Activated CD4-positive, alpha-beta T cell treated with anti-CD3 and anti-CD28 coated beads, Interleukin-2, amount 10 ng/mL, durations not matched to agents 24 days and 14 days (primary cell): ENCODE measurements at regions of chr13 and their contacts with region 1.

Region 1: GRCh38 chr13:102845630-102846260 is at the start of gene ERCC5:
- DNase-seq: peak; percentile 99
- H3K4me3 Mint-ChIP-seq: peak within 1 kb of the TSS; percentile 99
- H3K27ac Mint-ChIP-seq: peak within 1 kb of the TSS; percentile 99
- H3K4me1 Mint-ChIP-seq: peaks cover 35% of the 10 kb centered on the region
- H3K27me3 Mint-ChIP-seq: peaks cover 3% of the 10 kb centered on the region
- total RNA-seq, gene ERCC5: 39.4 and 47.4 TPM in 2 replicates

Region 2: DNA sequence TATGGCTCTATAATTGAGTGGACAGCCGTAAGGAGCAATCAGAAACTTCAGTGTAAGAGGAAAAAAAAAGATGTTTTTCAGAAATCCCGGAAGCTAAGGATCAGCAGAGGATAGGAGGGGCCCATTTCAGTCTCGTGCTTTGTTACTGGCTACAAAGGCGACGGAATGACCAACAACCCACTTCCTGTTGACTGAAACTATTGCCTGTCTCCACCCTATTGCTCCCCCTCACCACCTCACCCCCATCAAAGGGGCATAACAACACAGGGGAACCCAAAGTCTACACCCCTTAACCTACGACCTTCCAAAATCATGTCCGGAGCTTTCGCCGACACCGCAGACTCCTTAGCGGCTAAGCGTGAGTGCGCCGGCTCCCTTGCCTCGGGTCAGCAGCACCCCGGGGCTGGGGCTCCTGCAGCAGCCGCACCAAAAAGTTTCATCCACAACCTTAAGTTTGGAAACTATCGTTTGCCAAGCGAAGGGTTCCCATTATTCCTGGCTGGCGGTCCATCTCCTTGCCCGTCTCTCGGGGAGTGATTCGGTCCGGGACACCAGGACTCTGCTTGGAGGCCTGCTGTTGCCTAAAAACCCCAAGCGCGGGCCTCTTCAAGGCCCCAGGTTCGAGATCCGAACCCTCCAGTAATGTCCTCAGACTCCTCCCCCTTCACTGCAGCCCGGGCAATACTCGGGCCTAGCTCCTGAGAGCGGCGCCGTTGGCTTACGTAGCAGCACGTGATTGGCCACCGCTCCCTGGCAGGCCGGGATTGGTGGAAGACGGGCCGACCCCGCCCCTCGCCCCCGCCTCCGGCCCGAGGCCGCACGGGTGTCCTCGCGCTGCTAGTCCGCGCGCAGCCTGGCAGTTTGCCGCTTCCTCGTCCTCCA is 249.4 kb before region 1 on chr13 and contains the start of gene TPP2:
- intact Hi-C with region 1: loop called (anchors 1 kb)
- DNase-seq: peak; percentile 100
- H3K4me3 Mint-ChIP-seq: peak within 1 kb of the TSS; percentile 97
- H3K27ac Mint-ChIP-seq: peak within 1 kb of the TSS; percentile 99
- H3K4me1 Mint-ChIP-seq: peaks cover 48% of the 10 kb centered on the region
- H3K27me3 Mint-ChIP-seq: no peaks in the 10 kb centered on the region
- total RNA-seq, gene TPP2: 77.3 and 80.0 TPM in 2 replicates

Region 3: GRCh38 chr13:102680842-102681740 is 164.7 kb before region 1 on chr13:
- intact Hi-C with region 1: loop called (anchors 5 kb)
- DNase-seq: peak; percentile 61
- H3K4me3 Mint-ChIP-seq: no peak overlapping the region
- H3K27ac Mint-ChIP-seq: peak overlapping the region; percentile 62
- H3K4me1 Mint-ChIP-seq: peaks cover 26% of the 10 kb centered on the region
- H3K27me3 Mint-ChIP-seq: no peaks in the 10 kb centered on the region

Region 4: DNA sequence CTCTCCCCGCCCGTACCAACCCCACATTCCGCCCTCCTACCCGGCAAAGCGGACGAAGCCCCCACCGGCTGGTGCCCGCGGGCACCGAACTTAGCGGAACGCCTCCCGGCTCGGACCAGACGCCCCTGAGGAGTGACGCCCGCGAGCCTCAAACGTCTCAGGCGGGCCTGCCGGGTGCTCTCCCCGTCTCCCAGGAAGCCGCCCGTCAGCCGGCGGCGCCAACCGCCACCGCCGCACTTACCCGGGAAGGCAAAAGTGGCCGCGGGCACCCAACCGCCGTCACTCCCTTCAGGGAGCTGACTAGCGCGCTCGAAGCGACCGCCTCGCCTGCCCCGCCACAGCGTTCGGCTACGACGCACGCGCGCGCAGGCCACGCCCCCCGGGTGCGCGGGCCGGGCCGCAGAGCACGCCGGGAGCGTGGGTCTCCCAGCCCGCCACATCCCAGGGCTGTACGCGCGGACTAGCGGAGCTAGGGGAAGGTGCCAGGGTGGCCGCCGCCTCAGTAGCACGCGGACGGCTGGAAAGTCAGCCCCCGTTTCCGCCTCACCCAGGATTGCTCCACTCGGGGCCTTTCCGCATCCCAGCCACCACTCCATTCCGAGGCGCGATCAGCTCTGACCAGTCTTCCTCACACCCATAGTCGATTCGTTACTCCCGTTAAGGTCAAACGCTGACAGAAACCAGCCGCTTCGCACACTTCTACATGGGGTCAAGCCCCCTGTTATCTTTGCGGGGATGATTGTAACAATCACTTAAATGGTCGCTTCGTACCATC is 72.1 kb before region 1 on chr13 and contains the start of gene TEX30:
- intact Hi-C with region 1: loop called (anchors 1 kb)
- DNase-seq: peak; percentile 98
- H3K4me3 Mint-ChIP-seq: peak within 1 kb of the TSS; percentile 87
- H3K27ac Mint-ChIP-seq: peak within 1 kb of the TSS; percentile 93
- H3K4me1 Mint-ChIP-seq: peaks cover 49% of the 10 kb centered on the region
- H3K27me3 Mint-ChIP-seq: no peaks in the 10 kb centered on the region
- total RNA-seq, gene TEX30: 55.4 and 65.6 TPM in 2 replicates

Region 5: DNA sequence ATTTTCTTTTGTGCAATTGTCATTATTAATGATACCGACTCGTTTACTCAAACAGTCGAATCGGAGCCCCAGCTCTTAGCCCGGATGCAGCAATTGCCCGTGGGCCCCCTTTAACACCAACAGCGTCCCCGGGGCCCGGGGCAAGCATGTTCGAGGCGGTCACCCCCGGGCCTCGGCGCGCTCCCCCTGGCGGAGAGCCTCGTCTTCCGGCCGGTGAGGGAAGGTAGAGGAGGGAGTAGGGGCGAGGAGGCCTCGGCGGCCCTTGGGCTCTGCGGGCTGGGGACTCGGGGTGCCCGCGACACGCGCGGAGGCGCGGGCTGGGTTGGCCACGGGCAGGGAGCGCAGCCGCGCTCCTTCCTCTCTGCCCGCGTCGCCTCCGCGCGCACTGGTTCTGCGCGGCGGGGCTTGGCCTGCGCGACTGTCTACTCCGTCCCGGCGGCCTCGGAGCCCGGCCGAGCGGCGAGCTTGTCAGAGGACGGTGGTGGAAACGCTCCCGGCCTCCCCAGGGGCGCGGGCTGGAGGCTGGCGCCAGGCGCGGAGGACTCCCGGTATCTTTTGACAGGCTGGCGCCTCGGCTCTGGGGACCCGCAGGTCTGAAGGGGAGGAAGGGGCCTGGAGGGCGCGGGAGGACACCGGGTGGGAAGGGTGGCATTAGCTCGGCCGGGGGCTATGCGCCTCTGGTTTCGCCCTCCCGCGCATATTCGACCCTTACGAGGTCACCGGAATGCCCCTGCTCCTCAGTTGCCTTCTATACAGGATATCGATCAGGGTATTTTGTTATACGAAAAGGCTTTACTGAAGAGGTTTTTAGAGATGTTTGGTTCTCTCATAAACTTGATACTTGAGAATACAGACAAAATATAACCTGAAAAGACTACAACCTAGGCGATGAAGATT is 45.4 kb before region 1 on chr13:
- intact Hi-C with region 1: loop called (anchors 1 kb)
- DNase-seq: peak; percentile 97
- H3K4me3 Mint-ChIP-seq: peak overlapping the region; percentile 98
- H3K27ac Mint-ChIP-seq: peak overlapping the region; percentile 89
- H3K4me1 Mint-ChIP-seq: peaks cover 31% of the 10 kb centered on the region
- H3K27me3 Mint-ChIP-seq: no peaks in the 10 kb centered on the region